Activated CD4-positive, alpha-beta memory T cell treated with anti-CD3 and anti-CD28 coated beads, Interleukin-2, amount 10 ng/mL, durations not matched to agents 7 days and 5 days (primary cell): ENCODE measurements at regions of chr13 and their contacts with region 1.

Region 1: DNA sequence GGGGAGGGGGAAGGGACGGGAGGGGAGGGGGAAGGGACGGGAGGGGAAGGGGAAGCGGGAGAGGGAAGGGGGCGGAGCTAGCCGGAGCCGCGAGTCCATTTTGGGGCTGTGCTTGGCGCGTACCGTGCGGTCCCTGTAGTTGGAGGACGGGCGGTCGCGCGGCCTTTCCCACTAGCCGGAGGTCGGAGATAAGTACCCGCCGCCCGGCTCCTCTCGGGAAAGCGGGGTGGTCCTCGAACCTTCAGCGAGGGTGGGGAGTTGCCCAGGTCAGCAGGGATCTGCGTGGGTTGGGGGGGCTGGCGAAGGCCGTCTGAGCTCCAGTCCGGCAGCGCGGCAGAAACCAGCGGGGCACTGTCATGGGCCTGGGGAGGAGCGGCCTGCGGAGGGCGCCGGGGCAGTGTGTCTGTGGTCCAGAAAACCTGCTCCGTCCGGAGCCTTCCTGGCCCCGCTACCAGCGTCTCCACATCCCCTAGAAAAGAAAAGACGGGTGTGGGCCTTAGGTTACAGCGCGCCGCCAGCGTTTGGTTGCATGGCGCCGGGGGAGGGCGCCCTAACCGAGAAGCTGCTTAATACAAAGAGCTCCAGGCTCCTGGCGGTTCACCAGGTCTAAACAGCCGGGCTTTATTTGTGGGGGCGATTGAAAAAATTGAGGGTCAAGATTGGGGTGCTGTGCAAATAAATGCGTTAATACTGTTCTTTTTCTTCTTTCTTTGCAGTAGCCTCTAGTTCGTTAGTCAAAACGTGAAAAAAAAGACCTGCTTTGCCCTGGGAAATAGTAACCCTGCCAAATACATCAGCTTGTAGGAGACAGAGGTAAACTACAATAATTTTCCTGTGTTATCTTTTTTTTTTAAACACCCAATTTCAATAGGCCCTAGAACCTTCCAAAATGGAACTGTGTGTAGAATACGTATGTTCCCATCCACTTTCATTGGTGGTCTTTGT is at the start of gene TRIM13:
- DNase-seq: peak; percentile 86
- H3K4me3 Mint-ChIP-seq: peak within 1 kb of the TSS; percentile 75
- H3K27ac Mint-ChIP-seq: peak within 1 kb of the TSS; percentile 85
- H3K4me1 Mint-ChIP-seq: peaks cover 37% of the 10 kb centered on the region
- H3K27me3 Mint-ChIP-seq: no peaks in the 10 kb centered on the region
- total RNA-seq, gene TRIM13: 13.2 to 17.4 TPM

Region 2: DNA sequence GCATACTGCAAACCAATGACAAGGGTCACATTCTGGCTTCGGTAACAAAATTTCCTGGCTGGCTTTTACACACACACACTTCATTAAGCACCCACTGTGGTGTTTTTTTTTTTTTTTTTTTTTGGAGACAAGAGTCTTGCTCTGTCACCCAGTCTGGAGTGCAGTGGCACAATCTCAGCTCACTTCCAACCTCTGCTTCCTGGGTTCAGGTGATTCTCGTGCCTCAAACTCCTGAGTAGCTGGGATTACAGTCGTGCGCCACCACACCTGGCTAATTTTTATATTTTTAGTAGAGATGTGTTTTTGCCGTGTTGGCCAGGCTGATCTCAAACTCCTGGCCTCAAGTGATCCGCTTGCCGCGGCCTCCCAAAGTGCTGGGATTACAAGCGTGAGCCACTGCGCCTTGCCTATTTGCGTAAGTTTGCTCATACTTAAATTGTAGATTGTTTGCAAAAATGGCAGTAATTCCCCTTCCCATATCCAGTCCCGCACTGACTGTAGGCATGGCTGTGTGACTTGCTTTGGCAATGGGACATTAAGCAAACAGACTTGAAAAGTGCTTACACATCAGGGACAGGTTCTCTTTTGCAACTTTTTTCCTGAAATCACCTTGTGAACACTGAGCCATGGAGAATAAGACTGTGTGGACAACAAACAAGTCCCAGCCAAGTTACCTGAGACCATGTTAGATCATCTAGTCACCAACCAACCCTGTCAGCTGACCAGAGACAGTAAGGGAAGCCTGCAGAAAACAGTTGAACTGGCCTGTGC is 263.9 kb before region 1 on chr13:
- CTCF ChIA-PET with region 1: no interaction called
- POLR2A ChIA-PET with region 1: no interaction called
- DNase-seq: no peak
- H3K4me3 Mint-ChIP-seq: no peak overlapping the region
- H3K27ac Mint-ChIP-seq: no peak overlapping the region
- H3K4me1 Mint-ChIP-seq: no peaks in the 10 kb centered on the region
- H3K27me3 Mint-ChIP-seq: no peaks in the 10 kb centered on the region

Region 3: GRCh38 chr13:49936085-49936940 is 60.9 kb before region 1 on chr13 and contains the start of gene SPRYD7:
- CTCF ChIA-PET with region 1: interaction called, 13 read pairs
- POLR2A ChIA-PET with region 1: interaction called, 15 read pairs
- DNase-seq: peak; percentile 96
- H3K4me3 Mint-ChIP-seq: peak within 1 kb of the TSS; percentile 91
- H3K27ac Mint-ChIP-seq: peak within 1 kb of the TSS; percentile 62
- H3K4me1 Mint-ChIP-seq: peaks cover 15% of the 10 kb centered on the region
- H3K27me3 Mint-ChIP-seq: peaks cover 3% of the 10 kb centered on the region
- total RNA-seq, gene SPRYD7: 3.9 to 4.1 TPM

Region 4: GRCh38 chr13:49976314-49977258 is 20.6 kb before region 1 on chr13:
- CTCF ChIA-PET with region 1: interaction called, 16 read pairs
- POLR2A ChIA-PET with region 1: interaction called, 4 read pairs
- DNase-seq: peak; percentile 78
- H3K4me3 Mint-ChIP-seq: no peak overlapping the region
- H3K27ac Mint-ChIP-seq: no peak overlapping the region
- H3K4me1 Mint-ChIP-seq: peaks cover 2% of the 10 kb centered on the region
- H3K27me3 Mint-ChIP-seq: no peaks in the 10 kb centered on the region

Region 5: DNA sequence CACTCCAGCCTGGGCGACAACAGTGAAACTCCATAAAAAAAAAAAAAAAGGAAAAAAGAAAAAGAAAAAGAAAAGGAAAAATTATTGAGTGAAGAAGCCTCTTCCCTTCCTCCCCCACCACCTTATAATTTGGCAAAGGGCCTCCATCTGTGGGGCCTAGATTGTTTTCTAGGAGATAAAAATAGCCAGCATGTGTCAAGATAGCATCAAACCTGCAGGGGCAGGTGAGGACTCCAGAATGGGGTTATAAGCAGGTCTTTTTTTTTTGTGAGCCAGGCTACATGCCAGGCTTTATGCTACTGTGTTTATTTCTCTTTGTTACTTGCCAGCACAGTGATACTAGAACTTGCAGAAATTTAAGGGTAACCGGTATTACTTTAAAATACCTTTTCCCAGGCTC is 12.1 kb before region 1 on chr13:
- CTCF ChIA-PET with region 1: interaction called, 10 read pairs
- POLR2A ChIA-PET with region 1: interaction called, 4 read pairs
- DNase-seq: no peak
- H3K4me3 Mint-ChIP-seq: no peak overlapping the region
- H3K27ac Mint-ChIP-seq: no peak overlapping the region
- H3K4me1 Mint-ChIP-seq: no peaks in the 10 kb centered on the region
- H3K27me3 Mint-ChIP-seq: no peaks in the 10 kb centered on the region

Region 6: DNA sequence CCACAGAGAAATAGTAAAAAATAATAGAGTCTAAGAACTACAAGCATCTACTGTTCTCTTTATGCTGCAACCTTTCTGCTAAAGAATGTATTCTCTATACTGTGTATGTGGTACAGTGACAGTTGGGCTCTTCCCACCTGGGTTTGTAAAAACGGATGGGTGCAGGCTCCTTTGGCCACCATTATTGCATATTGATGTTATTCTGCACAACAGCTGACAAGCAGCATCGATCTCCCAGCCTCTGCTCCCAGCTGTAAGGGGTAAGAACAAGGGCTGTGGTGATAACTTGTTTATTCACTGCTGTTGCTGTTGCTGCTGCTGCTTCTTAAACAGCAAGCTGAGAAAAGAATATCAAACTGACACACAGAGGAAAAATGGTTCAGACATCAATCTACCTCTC is 74.2 kb after region 1 on chr13:
- CTCF ChIA-PET with region 1: interaction called, 10 read pairs
- POLR2A ChIA-PET with region 1: interaction called, 11 read pairs
- DNase-seq: no peak
- H3K4me3 Mint-ChIP-seq: no peak overlapping the region
- H3K27ac Mint-ChIP-seq: peak overlapping the region; percentile 7
- H3K4me1 Mint-ChIP-seq: peaks cover 40% of the 10 kb centered on the region
- H3K27me3 Mint-ChIP-seq: no peaks in the 10 kb centered on the region

Region 7: GRCh38 chr13:50098693-50099092 is 101.5 kb after region 1 on chr13:
- CTCF ChIA-PET with region 1: no interaction called
- POLR2A ChIA-PET with region 1: no interaction called
- DNase-seq: no peak
- H3K4me3 Mint-ChIP-seq: no peak overlapping the region
- H3K27ac Mint-ChIP-seq: no peak overlapping the region
- H3K4me1 Mint-ChIP-seq: no peaks in the 10 kb centered on the region
- H3K27me3 Mint-ChIP-seq: no peaks in the 10 kb centered on the region

Region 8: GRCh38 chr13:50130123-50130946 is 133.1 kb after region 1 on chr13:
- CTCF ChIA-PET with region 1: interaction called, 19 read pairs
- POLR2A ChIA-PET with region 1: interaction called, 82 read pairs
- DNase-seq: peak; percentile 31
- H3K4me3 Mint-ChIP-seq: peak overlapping the region; percentile 84
- H3K27ac Mint-ChIP-seq: peak overlapping the region; percentile 31
- H3K4me1 Mint-ChIP-seq: peaks cover 63% of the 10 kb centered on the region
- H3K27me3 Mint-ChIP-seq: peaks cover 72% of the 10 kb centered on the region